ENCODE measurements at regions of chr18 and their contacts with region 1.

Region 1: GRCh38 chr18:21111341-21112139 is at the start of gene ROCK1:
- DNase-seq: peak; percentile 94
- H3K4me3 ChIP-seq: peak within 1 kb of the TSS; percentile 96 to 100 (median 99)
- H3K27ac ChIP-seq: peak within 1 kb of the TSS; percentile 73
- H3K4me1 ChIP-seq: peaks cover 16% of the 10 kb centered on the region
- H3K27me3 ChIP-seq: no peaks in the 10 kb centered on the region
- CTCF ChIP-seq: no peak
- total RNA-seq, gene ROCK1: 31.8 to 55.9 TPM

Region 2: DNA sequence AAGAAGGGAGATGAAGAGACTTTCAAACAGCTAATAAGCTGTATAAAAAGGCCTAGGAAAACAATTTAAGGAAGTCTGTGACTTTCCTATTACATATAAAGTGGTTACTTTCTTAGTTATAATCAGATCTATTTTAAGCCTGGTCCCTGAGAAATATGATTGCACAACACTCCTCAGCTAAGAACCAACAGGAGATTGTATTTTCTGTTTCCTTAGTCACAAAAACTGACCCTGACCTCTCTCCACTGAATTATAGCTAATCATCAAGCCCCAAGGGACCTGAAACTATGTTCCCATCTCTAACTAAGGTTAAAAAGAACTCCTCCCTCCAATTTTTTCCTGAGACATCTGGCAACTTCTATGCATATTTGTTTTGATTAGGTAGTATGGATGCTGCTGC is 106.8 kb before region 1 on chr18:
- CTCF ChIA-PET with region 1: no interaction called
- dilution Hi-C with region 1: no loop called
- in situ Hi-C with region 1: no loop called
- intact Hi-C with region 1: loop called (anchors 10 kb)
- DNase-seq: peak; percentile 14
- H3K4me3 ChIP-seq: no peak overlapping the region
- H3K27ac ChIP-seq: no peak overlapping the region
- H3K4me1 ChIP-seq: peaks cover 4% of the 10 kb centered on the region
- H3K27me3 ChIP-seq: no peaks in the 10 kb centered on the region
- CTCF ChIP-seq: no peak

Region 3: GRCh38 chr18:21053127-21053526 is 58.4 kb before region 1 on chr18:
- CTCF ChIA-PET with region 1: no interaction called
- dilution Hi-C with region 1: no loop called
- in situ Hi-C with region 1: no loop called
- intact Hi-C with region 1: loop called (anchors 1 kb)
- DNase-seq: peak; percentile 87
- H3K4me3 ChIP-seq: no peak overlapping the region
- H3K27ac ChIP-seq: peak overlapping the region; percentile 68
- H3K4me1 ChIP-seq: peaks cover 37% of the 10 kb centered on the region
- H3K27me3 ChIP-seq: no peaks in the 10 kb centered on the region
- CTCF ChIP-seq: no peak

Region 4: GRCh38 chr18:21129566-21130216 is 18.2 kb after region 1 on chr18:
- CTCF ChIA-PET with region 1: no interaction called
- dilution Hi-C with region 1: no loop called
- in situ Hi-C with region 1: no loop called
- intact Hi-C with region 1: no loop called
- DNase-seq: no peak
- H3K4me3 ChIP-seq: no peak overlapping the region
- H3K27ac ChIP-seq: no peak overlapping the region
- H3K4me1 ChIP-seq: no peaks in the 10 kb centered on the region
- H3K27me3 ChIP-seq: no peaks in the 10 kb centered on the region
- CTCF ChIP-seq: no peak